ENCODE measurements at regions of chr1 and their contacts with region 1.

Region 1: DNA sequence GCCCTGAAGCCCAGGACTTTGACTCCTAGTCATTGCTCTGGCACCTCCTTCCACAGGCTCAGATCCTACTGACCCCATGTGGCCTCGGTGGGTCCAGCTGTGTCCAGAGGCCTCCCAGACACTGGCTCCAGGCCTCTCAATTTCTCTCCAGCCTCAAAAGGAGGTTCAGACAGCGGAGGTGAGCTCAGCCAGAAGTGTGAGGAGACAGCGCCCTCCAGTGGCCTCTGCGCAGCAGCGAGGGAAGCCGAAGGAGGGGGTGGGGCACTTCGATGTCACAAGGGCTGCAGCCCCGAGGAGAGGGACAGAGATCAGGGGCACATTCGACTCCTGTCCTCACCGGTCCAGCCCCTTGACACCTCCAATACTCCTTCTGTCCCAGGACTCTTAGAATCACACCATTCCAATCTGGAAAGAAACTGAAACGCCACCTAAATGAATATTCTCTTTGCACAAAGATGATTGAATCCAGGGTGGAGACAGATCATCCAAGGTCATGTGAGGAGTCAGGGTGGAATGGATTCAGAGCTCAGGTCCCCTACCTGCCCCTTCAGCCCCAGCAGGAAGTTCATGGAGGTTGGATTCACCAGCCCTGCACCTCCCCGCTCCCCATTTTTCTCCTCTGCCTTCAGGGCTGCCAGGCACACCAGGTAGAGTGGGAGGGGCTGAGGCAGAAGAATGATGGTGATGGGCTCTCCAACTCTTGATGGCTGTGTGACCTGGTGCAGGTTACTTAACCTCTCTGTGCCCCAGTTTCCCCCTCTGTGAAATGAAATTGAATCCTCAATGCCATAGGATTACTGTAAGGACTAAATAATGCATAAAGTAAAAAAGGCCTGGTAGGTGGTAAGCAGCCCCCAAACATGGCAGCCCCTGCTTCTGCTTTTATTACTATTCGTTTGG is 34.8 kb upstream of the ZBTB40 start:
- DNase-seq: no peak
- H3K4me3 ChIP-seq: no peak overlapping the region
- H3K27ac ChIP-seq: no peak overlapping the region
- H3K4me1 ChIP-seq: peaks cover 4 to 24% (median 19%) of the 10 kb centered on the region in 4 donors
- H3K27me3 ChIP-seq: peaks cover 0 to 49% (median 0%) of the 10 kb centered on the region in 4 donors
- CTCF ChIP-seq: peak; percentile 70 to 76 (median 73)
- EP300 ChIP-seq: no peak
- POLR2A ChIP-seq: no peak

Region 2: GRCh38 chr1:22105611-22106207 is 311.1 kb before region 1 on chr1:
- intact Hi-C with region 1: loop called (anchors 5 kb)
- DNase-seq: no peak
- H3K4me3 ChIP-seq: no peak overlapping the region
- H3K27ac ChIP-seq: no peak overlapping the region
- H3K4me1 ChIP-seq: peaks cover 13 to 62% (median 38%) of the 10 kb centered on the region in 4 donors
- H3K27me3 ChIP-seq: no peaks in the 10 kb centered on the region
- CTCF ChIP-seq: peak; percentile 72 to 79 (median 76)
- EP300 ChIP-seq: no peak
- POLR2A ChIP-seq: no peak

Region 3: DNA sequence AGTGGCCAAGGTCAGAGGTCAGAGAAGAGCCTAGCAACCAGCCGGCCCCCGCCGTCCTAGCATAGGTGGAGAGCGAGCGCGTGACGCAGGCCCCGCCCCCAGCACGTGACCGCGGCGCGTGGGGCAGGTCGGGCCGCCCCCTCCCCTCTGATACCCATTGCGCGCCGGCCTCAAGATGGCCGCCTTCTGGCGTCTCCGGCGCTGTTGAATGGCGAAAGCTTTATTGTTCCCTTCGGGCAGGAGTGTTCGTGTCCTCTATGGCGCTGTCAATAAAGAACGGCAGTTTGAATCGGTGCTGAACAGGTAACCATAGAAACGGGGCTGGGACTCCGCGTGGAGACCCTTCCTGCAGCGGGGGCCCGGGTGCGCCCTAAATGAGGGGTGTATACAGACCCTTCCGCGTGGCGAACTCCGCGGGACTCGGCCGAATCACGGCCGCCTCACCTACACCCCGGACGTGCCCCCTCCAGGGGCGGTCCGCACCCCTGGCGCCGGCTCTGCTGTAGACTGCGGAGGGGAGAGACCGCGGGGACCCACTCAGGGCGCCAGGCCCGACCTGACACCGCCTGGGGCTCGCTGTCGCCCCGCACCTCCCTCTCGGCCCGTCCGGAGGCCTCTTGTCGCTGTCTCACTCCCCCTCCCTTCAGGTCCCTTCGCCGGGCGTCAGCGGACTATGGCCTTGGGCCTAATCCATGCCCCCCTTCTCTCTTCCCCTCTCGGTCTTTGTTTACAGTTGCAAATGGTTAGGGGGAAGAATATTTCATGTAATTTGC is 35.1 kb after region 1 on chr1 and contains the start of gene ZBTB40:
- intact Hi-C with region 1: no loop called
- DNase-seq: peak; percentile 99
- H3K4me3 ChIP-seq: peak within 1 kb of the TSS; percentile 90 to 96 (median 94)
- H3K27ac ChIP-seq: peak within 1 kb of the TSS; percentile 93 to 97 (median 96)
- H3K4me1 ChIP-seq: peaks cover 37 to 71% (median 57%) of the 10 kb centered on the region in 4 donors
- H3K27me3 ChIP-seq: no peaks in the 10 kb centered on the region
- CTCF ChIP-seq: peak in 1 of 3 experiments; percentile 29
- EP300 ChIP-seq: no peak
- POLR2A ChIP-seq: no peak
- total RNA-seq, gene ZBTB40: 13.8 to 21.1 (median 18.4) TPM

Region 4: GRCh38 chr1:22641906-22642636 is 225.3 kb after region 1 on chr1:
- intact Hi-C with region 1: loop called (anchors 1 kb)
- DNase-seq: peak; percentile 96
- H3K4me3 ChIP-seq: peak overlapping the region in 1 of 4 donors; percentile 32
- H3K27ac ChIP-seq: no peak overlapping the region
- H3K4me1 ChIP-seq: peaks cover 0 to 11% (median 7%) of the 10 kb centered on the region in 4 donors
- H3K27me3 ChIP-seq: peaks cover 0 to 46% (median 0%) of the 10 kb centered on the region in 4 donors
- CTCF ChIP-seq: peak; percentile 87 to 97 (median 95)
- EP300 ChIP-seq: no peak
- POLR2A ChIP-seq: no peak

Measured in esophagus muscularis mucosa (tissue), 4 donors.